Posterior cingulate gyrus (tissue), 11 donors: ENCODE measurements at regions of chr10 and their contacts with region 1.

Region 1: GRCh38 chr10:119596537-119597404 is at the start of gene TIAL1:
- DNase-seq: peak; percentile 97 to 100 (median 99)

Region 2: DNA sequence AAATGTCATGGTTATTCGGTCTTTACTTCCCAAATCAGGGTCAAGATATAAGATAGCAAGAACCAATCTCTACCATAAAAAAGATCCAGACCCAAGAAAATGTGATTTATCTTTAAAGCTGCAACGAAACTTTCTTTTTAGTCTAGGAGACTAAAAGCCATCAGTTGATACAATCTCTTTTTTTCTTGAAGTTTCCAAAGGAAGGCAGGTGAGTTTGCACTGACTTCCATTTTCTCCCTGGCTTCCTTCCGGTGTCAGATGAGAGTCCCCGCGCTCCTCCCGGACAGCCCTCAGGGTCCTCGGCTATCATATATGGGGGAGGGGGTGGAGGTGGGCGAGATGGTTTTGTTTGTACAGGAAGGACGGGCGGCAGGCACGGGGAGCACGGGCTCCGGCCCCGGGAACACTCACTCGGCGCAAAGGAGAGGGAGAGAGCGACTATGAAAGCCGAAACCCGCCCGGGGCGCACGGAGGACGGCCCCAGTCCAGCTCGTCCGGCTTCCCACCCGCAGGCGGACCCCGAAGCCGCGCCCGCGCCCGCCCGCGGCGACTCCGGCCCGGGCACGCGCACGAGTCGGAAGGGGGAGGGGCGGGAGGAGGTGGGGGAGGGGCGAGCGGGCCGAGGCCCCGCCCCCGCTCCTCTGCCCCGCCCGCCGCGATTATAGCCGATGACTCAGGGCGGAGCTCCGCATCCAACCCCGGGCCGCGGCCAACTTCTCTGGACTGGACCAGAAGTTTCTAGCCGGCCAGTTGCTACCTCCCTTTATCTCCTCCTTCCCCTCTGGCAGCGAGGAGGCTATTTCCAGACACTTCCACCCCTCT is 54.1 kb after region 1 on chr10 and contains the start of gene BAG3:
- intact Hi-C with region 1: loop called (anchors 2 kb)
- DNase-seq: peak; percentile 71 to 97 (median 84)

Region 3: DNA sequence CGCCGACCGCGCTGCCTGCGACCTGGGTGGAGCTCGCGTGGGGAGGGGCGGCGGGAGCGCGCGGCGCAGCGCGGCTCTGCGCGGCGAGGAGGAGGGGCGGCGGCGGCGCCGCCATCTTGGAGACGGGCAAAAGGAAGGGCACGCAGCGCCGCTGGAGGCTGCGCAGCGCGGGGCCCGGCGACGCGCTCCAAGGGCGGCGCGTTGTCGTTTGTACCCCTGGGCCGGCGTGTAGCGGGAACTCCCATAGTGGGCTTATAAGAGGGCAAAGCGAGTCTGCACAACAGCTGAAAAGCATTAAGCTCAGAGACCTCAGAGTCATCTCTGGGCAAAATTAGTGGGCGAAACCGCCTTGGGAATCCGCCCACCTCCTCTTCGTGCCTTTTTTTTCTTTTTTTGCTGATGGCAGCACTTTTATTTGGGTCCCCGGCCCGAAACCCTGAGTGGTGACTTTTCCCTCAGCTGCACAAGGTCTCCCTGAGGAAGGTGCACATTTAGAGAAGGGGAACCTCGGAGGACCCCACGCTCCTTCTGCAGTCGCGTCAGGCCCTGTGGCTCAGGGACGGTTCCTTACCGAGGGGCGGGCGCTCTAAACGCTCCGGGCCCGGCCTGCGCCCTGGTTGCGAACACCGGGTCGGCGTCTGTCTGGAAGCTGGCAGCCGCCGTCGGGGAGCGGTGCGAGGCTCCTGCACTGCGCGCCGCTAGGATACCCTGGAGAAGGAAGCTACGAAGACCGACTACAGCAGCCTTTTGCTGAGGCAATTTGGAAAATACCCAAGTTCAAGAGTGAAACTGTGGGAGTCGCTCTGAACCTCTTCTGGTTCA is 276.3 kb after region 1 on chr10:
- intact Hi-C with region 1: loop called (anchors 1 kb)
- DNase-seq: peak; percentile 80 to 98 (median 85)

Region 4: GRCh38 chr10:119892188-119893065 is 295.7 kb after region 1 on chr10 and contains the start of gene SEC23IP:
- intact Hi-C with region 1: loop called (anchors 2 kb)
- DNase-seq: peak; percentile 98 to 100 (median 99)

Region 5: DNA sequence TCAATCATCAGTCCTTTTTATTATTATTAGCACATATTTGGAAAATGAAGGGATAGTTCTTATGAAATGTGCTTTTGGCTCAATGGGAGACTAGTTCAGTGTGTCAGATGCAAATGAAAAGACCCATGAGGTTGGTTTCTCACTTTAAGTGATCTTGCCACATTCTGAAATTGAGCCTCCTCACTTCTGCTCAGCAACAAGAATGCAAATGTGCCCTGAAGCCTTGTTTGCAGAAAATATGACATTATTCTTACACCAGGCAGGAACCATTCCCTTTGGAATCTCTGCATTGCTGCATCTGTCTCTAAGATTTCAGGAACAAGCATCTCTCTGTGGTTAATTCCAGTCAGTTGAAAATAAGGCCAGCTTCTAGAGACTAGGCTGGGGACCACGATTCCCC is 674.1 kb after region 1 on chr10:
- intact Hi-C with region 1: no loop called
- DNase-seq: no peak